Tibial artery (tissue), 4 donors: ENCODE measurements at regions of chr9 and their contacts with region 1.

Region 1: GRCh38 chr9:125558453-125559092 is 148.4 kb downstream of the MAPKAP1 start:
- DNase-seq: peak in 1 of 2 donors; percentile 52
- H3K4me3 ChIP-seq: no peak overlapping the region
- H3K27ac ChIP-seq: no peak overlapping the region
- H3K4me1 ChIP-seq: no peaks in the 10 kb centered on the region
- H3K27me3 ChIP-seq: no peaks in the 10 kb centered on the region
- CTCF ChIP-seq: peak; percentile 72

Region 2: GRCh38 chr9:126228781-126229444 is 670.3 kb after region 1 on chr9:
- intact Hi-C with region 1: loop called (anchors 10 kb)
- DNase-seq: peak; percentile 62 to 69
- H3K4me3 ChIP-seq: no peak overlapping the region
- H3K27ac ChIP-seq: no peak overlapping the region
- H3K4me1 ChIP-seq: no peaks in the 10 kb centered on the region
- H3K27me3 ChIP-seq: peaks cover 0 to 53% of the 10 kb centered on the region in 2 donors
- CTCF ChIP-seq: peak; percentile 85 to 89